Activated naive CD4-positive, alpha-beta T cell treated with anti-CD3 and anti-CD28 coated beads for 36 hours (primary cell): ENCODE measurements at regions of chr11 and their contacts with region 1.

Region 1: DNA sequence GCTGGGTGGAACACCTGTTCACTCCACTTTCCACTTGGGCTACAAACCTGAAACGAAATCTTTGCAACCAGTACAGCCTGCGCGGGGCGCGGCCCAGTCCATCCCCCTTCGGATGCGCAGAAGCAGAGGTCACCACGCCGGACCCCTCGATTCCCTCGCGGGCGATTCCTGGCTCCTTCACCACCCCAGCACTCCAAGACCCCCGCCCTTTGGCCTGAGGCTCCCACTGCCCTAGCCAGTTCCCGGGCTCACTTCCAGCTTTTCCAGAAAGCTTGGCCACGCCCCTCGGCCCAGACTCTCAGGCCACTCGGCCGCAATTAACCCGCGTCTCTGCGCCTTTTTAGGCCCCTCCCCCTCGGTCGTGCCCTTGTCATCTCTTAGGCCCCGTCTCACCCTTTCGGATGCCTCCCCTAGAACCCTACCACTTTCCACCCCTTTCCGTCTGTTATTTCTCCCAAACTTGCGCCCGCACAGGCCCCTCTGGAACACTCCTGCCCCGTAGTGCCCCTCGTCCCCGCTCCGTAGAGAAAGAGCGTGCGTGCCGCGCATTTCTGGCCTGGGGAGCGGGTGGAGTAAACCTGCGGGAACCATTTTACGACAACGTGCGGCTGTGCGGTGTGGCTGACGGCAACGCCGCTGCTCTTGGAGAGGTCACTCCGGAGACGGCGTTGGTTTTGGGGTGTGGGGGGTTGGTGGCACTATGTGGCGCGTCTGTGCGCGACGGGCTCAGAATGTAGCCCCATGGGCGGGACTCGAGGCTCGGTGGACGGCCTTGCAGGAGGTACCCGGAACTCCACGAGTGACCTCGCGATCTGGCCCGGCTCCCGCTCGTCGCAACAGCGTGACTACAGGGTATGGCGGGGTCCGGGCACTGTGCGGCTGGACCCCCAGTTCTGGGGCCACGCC is at the start of gene DLAT:
- DNase-seq: peak; percentile 89
- H3K4me3 Mint-ChIP-seq: peak within 1 kb of the TSS; percentile 100
- H3K27ac Mint-ChIP-seq: peak within 1 kb of the TSS; percentile 100
- H3K4me1 Mint-ChIP-seq: peaks cover 28% of the 10 kb centered on the region
- H3K27me3 Mint-ChIP-seq: no peaks in the 10 kb centered on the region
- total RNA-seq, gene DLAT: 34.2 to 36.8 TPM

Region 2: DNA sequence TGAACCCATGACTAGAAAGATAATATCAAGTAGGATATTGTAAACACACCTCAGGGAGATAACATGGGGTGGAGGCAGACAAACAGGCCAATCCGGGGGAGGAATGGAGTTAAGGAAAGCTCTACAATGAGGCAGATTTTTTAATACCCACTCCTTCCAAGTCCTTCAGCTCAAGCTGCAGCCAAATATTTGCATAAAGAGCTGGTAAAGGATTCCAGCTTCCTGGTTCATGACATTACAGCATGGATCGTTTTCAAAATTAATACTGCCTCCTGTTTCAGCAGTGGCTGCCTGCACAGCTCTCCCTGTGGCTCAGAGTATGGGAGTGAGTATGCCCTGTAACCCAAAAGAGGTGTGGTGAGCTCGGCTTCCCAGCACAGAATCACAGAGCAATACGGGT is 721.6 kb before region 1 on chr11:
- CTCF ChIA-PET with region 1: no interaction called
- intact Hi-C with region 1: no loop called
- DNase-seq: no peak
- H3K4me3 Mint-ChIP-seq: no peak overlapping the region
- H3K27ac Mint-ChIP-seq: no peak overlapping the region
- H3K4me1 Mint-ChIP-seq: no peaks in the 10 kb centered on the region
- H3K27me3 Mint-ChIP-seq: peaks cover 24% of the 10 kb centered on the region

Region 3: GRCh38 chr11:111870886-111871692 is 153.9 kb before region 1 on chr11 and contains the start of gene ALG9:
- CTCF ChIA-PET with region 1: no interaction called
- intact Hi-C with region 1: loop called (anchors 2 kb)
- DNase-seq: peak; percentile 93
- H3K4me3 Mint-ChIP-seq: peak within 1 kb of the TSS; percentile 89
- H3K27ac Mint-ChIP-seq: peak within 1 kb of the TSS; percentile 83
- H3K4me1 Mint-ChIP-seq: peaks cover 25% of the 10 kb centered on the region
- H3K27me3 Mint-ChIP-seq: no peaks in the 10 kb centered on the region
- total RNA-seq, gene ALG9: 21.3 to 21.9 TPM

Region 4: DNA sequence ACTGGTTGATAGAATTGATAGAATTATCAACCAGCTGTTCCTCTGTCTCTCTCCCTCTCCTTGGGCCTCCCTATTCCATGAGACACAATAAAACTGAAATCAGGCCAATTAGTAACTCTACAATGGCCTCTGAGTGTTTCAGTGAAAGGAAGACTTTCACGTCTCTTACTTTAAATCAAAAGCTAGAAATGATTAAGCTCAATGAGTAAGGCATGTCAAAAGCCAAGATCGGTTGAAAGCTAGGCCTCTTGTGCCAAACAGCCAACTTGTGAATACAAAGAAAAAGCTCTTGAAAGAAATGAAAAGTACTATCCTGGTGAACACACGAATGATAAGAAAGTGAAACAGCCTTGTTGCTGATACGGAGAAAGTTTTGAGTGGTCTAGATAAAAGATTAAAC is 32.1 kb after region 1 on chr11:
- CTCF ChIA-PET with region 1: interaction called, 3 read pairs
- intact Hi-C with region 1: loop called (anchors 2 kb)
- DNase-seq: peak; percentile 35
- H3K4me3 Mint-ChIP-seq: no peak overlapping the region
- H3K27ac Mint-ChIP-seq: peak overlapping the region; percentile 84
- H3K4me1 Mint-ChIP-seq: peaks cover 15% of the 10 kb centered on the region
- H3K27me3 Mint-ChIP-seq: no peaks in the 10 kb centered on the region

Region 5: GRCh38 chr11:112074026-112074811 is 49.2 kb after region 1 on chr11 and contains the start of gene NKAPD1:
- CTCF ChIA-PET with region 1: no interaction called
- intact Hi-C with region 1: loop called (anchors 1 kb)
- DNase-seq: peak; percentile 86
- H3K4me3 Mint-ChIP-seq: peak within 1 kb of the TSS; percentile 97
- H3K27ac Mint-ChIP-seq: peak within 1 kb of the TSS; percentile 97
- H3K4me1 Mint-ChIP-seq: peaks cover 28% of the 10 kb centered on the region
- H3K27me3 Mint-ChIP-seq: peaks cover 6% of the 10 kb centered on the region
- total RNA-seq, gene NKAPD1: 14.8 to 19.6 TPM

Region 6: GRCh38 chr11:112226062-112226830 is 201.2 kb after region 1 on chr11 and contains the start of gene PTS:
- CTCF ChIA-PET with region 1: no interaction called
- intact Hi-C with region 1: loop called (anchors 1 kb)
- DNase-seq: peak; percentile 86
- H3K4me3 Mint-ChIP-seq: peak within 1 kb of the TSS; percentile 88
- H3K27ac Mint-ChIP-seq: peak within 1 kb of the TSS; percentile 91
- H3K4me1 Mint-ChIP-seq: peaks cover 17% of the 10 kb centered on the region
- H3K27me3 Mint-ChIP-seq: no peaks in the 10 kb centered on the region
- total RNA-seq, gene PTS: 34.6 to 39.0 TPM